BJ (cell line): ENCODE measurements at regions of chr9 and their contacts with region 1.

Region 1: DNA sequence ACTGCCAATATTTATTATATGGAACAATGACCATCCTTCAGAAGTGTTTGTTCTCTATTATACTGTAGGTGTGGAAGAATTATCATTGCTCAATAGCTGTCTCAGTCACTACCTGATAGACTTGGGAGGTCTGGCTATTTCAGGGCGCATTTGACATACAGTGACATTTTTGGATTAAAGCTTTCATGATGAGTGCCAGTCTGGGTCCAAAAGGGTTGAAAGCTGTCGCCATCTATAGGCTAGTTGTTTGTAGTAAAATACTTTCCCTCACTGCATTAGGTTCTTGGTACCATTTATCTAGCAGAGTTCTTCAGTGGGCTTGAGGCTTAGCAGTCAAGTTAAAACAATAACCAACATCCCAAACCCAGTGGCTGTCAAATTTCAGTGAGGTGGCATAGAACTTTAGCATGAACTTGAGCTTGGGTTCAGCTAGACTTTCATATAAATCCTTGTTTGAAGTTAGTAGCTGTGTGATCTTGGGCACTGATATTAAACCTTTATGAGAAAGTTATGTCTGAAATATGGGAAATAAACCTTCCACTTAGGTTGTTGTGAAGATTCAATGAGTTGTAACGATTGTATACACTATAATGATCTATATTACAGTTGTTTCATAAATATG is 110.5 kb upstream of the CDKN2B start:
- DNase-seq: no peak
- H3K4me3 ChIP-seq: no peak overlapping the region
- H3K27me3 ChIP-seq: no peaks in the 10 kb centered on the region
- CTCF ChIP-seq: peak; percentile 69

Region 2: DNA sequence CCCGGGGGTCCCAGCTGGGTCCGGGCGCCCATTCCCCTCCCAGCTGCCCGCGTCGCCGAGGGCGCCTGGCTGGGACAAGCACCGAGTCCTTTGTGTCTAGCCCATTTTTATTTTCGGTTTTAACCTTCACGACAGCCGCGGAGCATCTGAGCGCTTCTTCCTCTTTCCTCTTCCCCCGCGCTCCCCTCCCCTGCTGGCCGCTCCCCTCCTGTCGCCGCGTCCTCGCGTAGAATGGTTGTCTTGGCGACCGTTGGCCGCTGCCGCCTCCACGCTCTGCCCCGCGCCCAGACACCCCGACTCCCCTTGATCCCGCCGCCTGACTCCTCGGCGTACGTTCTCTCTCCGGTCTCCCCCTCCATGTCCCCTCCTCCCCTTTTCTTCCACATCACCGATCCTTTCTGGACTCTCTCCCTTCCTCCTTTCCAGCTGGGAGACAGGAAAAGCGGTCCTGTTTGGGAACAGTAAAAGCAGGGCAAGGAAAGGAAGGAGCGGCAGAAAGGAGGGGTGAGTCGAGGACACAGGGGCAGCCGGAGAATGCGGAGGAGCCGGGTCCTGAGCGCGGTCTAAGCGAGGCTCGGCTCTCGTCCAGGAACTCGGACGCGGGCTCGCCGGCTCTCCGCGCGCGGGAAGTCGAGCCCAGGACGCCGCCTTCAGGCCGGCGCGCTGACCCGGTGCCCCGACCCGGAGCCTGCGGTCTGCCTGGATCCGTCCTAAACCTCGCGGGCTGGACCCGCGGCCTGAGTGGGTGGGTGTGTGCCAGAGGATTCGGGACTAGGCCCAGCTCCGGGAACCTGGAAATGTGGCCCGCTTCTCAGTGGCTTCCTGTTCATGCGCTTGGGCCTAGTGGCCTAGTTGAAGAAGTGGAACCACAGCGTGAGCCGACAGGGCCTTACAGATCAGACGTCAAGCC is 124.2 kb before region 1 on chr9:
- CTCF ChIA-PET with region 1: interaction called, 11 read pairs
- POLR2A ChIA-PET with region 1: no interaction called
- DNase-seq: no peak
- H3K4me3 ChIP-seq: peak overlapping the region; percentile 86
- H3K27me3 ChIP-seq: no peaks in the 10 kb centered on the region
- CTCF ChIP-seq: peak; percentile 37; the same call in 1 of the 2 replicates

Region 3: GRCh38 chr9:22037954-22038690 is 81.5 kb before region 1 on chr9:
- CTCF ChIA-PET with region 1: interaction called, 10 read pairs
- POLR2A ChIA-PET with region 1: no interaction called
- DNase-seq: no peak
- H3K4me3 ChIP-seq: no peak overlapping the region
- H3K27me3 ChIP-seq: peaks cover 1% of the 10 kb centered on the region; the same call in 1 of the 2 replicates
- CTCF ChIP-seq: peak; percentile 41

Region 4: DNA sequence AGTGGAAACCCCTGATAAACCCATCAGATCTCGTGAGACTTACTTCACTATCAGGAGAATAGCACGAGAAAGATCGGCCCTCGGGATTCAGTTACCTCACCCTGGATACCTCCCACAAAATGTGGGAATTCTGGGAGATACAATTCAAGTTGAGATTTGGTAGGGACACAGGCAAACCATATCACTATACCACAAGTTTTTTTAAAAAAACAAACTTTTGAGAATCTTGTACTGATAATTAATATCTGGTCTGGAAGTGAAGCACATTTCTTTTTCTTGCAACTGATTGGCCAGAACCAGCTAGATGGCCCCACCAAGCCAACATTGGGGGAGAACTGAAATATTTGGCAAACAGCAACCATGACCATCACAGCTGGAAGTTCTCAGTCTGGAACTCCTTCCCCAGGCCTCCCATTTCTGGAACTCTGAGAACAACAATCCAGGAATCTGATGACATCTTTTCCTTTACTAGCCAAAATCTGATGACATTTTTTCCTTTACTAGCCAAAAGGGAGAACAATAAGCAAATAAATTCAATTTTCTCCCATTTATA is 58.7 kb before region 1 on chr9:
- CTCF ChIA-PET with region 1: no interaction called
- POLR2A ChIA-PET with region 1: no interaction called
- DNase-seq: no peak
- H3K4me3 ChIP-seq: no peak overlapping the region
- H3K27me3 ChIP-seq: no peaks in the 10 kb centered on the region
- CTCF ChIP-seq: no peak

Region 5: GRCh38 chr9:22141906-22142305 is 22.3 kb after region 1 on chr9:
- CTCF ChIA-PET with region 1: interaction called, 4 read pairs
- POLR2A ChIA-PET with region 1: interaction called, 15 read pairs
- DNase-seq: no peak
- H3K4me3 ChIP-seq: no peak overlapping the region
- H3K27me3 ChIP-seq: no peaks in the 10 kb centered on the region
- CTCF ChIP-seq: no peak

Region 6: DNA sequence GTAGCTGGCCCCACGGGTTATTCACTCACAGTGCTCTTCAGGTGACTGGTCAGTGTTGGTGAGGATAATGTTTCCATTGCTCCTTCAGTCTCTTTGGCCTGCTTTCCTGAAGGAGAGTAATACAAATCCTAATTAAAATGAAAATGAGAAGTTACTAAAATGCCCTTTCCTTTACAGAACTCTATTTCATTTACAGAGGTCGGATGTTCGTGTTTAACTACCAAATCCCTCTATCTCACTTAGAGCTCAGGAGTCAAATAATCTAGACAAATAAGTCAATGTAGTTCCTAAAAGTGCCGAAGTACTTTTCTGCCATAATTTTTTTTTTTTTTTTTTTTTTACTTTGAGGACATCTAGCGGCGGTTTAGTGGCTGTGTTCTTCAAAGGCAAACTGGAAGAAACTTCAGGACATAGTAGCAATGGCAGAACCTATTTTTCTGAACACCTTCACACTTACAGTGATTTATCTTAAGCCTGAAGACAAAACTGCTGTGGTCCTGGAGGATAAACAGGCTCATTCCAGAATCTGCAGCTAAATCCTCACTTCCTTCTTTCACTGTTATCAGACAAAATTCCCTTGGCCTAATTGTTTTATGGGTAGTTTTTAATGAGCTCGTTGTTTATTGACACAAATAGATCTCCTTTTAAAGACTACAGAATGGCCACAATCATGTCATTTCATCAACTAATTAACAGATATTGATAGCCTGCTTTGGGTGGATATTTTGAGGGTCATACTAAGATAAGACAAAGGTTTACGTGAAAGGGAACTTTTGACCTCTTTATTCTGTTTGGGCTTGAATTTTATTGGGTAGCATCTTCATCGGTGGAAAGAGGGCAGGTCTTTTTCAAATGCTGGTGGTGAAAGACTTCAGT is 119.4 kb after region 1 on chr9:
- CTCF ChIA-PET with region 1: interaction called, 24 read pairs
- POLR2A ChIA-PET with region 1: no interaction called
- DNase-seq: no peak
- H3K4me3 ChIP-seq: no peak overlapping the region
- H3K27me3 ChIP-seq: no peaks in the 10 kb centered on the region
- CTCF ChIP-seq: peak; percentile 63